ENCODE measurements at regions of chr19 and their contacts with region 1.

Region 1: DNA sequence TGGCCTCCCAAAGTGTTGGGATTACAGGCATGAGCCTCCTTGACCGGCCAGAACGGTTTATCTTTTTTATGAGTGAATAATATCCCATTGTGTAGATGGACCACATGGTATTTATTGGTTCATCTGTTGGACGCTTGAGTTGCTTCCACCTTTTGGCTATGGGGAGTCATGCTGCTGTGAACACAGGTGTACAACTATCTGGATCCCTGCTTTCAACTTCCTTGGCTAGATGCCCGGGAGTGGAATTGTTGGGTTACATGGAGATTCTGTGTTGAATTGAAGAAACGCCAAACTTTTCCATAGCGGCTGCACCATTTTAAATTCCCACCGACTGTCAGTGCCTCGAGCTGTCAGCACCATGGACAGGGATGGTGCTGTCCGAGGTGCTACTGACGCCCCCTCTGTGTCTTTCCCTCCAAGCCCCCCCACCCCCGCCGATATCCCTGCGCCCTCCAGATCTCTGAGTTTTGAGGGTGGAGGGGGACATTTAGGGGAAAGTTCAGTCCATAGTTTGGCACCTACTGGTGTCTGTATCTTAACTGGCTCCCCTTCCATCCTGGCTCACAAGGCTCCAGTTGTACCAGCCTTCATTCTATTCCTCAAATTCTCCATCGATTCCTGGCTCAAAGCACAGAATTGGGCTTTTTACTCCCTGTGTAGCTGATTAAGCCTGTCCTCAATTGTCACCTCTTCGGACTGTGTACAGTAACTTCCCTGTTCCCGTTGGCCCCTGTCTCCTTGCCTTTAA is 27.3 kb downstream of the PNPLA6 start:
- DNase-seq: peak; percentile 47
- ATAC-seq: no peak
- H3K4me3 Mint-ChIP-seq: no peak overlapping the region
- H3K27ac Mint-ChIP-seq: no peak overlapping the region
- H3K4me1 Mint-ChIP-seq: no peaks in the 10 kb centered on the region
- H3K27me3 Mint-ChIP-seq: no peaks in the 10 kb centered on the region; the same call in 1 of the 2 replicates
- CTCF ChIP-seq: no peak

Region 2: GRCh38 chr19:7408251-7408650 is 154.6 kb before region 1 on chr19:
- CTCF ChIA-PET with region 1: interaction called, 10 read pairs
- POLR2A ChIA-PET with region 1: no interaction called
- DNase-seq: no peak
- ATAC-seq: no peak
- H3K4me3 Mint-ChIP-seq: no peak overlapping the region
- H3K27ac Mint-ChIP-seq: peak overlapping the region; percentile 30; the same call in 1 of the 2 replicates
- H3K4me1 Mint-ChIP-seq: peaks cover 21% of the 10 kb centered on the region
- H3K27me3 Mint-ChIP-seq: no peaks in the 10 kb centered on the region; the same call in 1 of the 2 replicates
- CTCF ChIP-seq: no peak

Region 3: GRCh38 chr19:7540761-7541491 is 21.9 kb before region 1 on chr19:
- CTCF ChIA-PET with region 1: interaction called, 12 read pairs
- POLR2A ChIA-PET with region 1: no interaction called
- DNase-seq: peak; percentile 89
- ATAC-seq: peak; percentile 99
- H3K4me3 Mint-ChIP-seq: no peak overlapping the region
- H3K27ac Mint-ChIP-seq: no peak overlapping the region
- H3K4me1 Mint-ChIP-seq: peaks cover 4% of the 10 kb centered on the region; the same call in 1 of the 2 replicates
- H3K27me3 Mint-ChIP-seq: no peaks in the 10 kb centered on the region
- CTCF ChIP-seq: no peak

Region 4: GRCh38 chr19:7595466-7596133 is 32.8 kb after region 1 on chr19 and contains the start of gene CAMSAP3:
- CTCF ChIA-PET with region 1: interaction called, 85 read pairs
- POLR2A ChIA-PET with region 1: no interaction called
- DNase-seq: peak; percentile 90
- ATAC-seq: peak; percentile 96
- H3K4me3 Mint-ChIP-seq: peak within 1 kb of the TSS; percentile 79
- H3K27ac Mint-ChIP-seq: no peak within 1 kb of the TSS
- H3K4me1 Mint-ChIP-seq: peaks cover 17% of the 10 kb centered on the region
- H3K27me3 Mint-ChIP-seq: peaks cover 17% of the 10 kb centered on the region
- CTCF ChIP-seq: no peak
- total RNA-seq, gene CAMSAP3: 27.8 to 34.6 TPM (median 32.1 TPM) in 3 replicates

Region 5: DNA sequence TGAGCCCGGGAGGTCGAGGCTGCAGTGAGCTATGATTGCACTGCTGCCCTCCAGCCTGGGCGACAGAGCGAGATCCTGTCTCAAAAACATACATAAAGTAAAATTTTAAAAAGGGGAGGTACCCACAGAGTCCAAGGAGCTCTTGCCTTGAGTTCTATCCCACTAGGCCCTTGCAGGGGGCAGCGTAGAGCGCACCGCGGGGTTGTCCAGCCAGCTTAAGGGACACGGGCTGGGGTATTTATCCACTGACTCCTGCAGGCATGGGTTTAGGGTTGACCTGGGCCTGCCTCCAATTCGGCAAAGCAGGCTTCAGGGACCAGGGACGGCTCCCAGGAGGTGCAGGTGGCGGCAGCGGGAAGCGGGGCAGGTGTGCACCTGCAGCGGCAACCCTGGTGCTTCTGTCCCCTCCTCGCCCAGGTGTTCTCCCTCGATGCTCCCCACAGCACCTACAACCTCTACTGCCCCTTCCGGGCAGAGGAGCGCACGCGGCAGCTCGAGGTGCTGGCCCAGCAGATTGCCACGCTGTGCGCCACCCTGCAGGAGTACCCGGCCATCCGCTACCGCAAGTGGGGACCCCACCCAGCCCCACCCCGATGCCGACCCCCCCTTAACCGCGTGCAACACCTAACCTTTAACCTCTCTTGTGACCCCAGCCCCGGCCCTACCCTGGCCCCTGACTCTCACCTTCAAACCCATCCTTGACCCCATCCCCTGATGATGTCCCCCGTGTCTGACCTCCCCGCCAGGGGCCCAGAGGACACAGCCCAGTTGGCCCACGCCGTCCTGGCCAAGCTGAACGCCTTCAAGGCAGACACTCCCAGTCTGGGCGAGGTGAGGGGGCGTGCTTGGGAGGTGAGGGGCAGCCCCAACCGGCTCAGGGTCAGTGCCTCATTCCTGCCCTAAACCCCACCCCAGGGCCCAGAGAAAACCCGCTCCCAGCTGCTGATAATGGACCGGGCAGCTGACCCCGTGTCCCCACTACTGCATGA is 78.8 kb after region 1 on chr19:
- CTCF ChIA-PET with region 1: interaction called, 24 read pairs
- POLR2A ChIA-PET with region 1: no interaction called
- DNase-seq: peak; percentile 66
- ATAC-seq: peak; percentile 57
- H3K4me3 Mint-ChIP-seq: no peak overlapping the region
- H3K27ac Mint-ChIP-seq: no peak overlapping the region
- H3K4me1 Mint-ChIP-seq: no peaks in the 10 kb centered on the region
- H3K27me3 Mint-ChIP-seq: peaks cover 3% of the 10 kb centered on the region
- CTCF ChIP-seq: 0 out of 2 replicates have a peak, but pooled peaks have one; percentile 31

Region 6: DNA sequence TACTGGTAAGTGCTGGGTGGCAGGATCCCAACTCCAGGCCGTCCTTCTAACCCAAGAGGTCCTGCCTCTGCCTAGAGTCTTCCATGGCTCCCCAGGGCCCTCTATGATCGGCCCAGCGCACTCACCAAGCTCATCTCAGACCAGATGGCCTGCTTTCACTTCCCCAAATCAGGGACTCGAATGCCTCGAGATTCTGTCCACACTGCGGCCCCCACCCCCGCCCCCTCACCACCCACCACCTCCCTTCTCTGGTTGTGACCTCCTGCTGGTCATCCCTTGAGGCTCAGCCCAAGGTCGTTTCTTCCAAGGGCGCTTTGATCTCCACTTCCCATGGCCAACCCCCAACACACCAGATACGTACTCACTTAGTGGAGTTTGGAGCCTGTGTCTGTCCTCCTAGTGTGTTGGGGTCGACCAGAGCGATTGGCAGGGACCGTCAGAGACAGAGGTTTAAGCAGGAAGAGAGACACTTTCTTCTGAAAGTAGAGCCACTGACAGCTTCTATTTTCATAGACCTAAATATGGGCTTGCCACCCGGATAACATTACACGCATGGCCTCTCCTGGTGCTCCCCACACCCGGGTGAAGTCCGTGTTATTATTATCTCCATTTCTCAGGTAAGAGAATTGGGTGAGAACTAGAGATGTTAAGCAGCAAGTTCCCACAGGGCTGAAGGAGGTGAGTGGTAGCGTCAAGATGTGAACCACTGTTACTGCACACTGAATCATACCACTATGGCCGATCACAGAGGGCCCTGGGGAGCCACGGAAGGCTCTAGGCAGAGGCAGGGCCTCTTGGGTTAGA is 139.0 kb after region 1 on chr19 and contains the start of gene FCER2:
- CTCF ChIA-PET with region 1: interaction called, 15 read pairs
- POLR2A ChIA-PET with region 1: no interaction called
- DNase-seq: no peak
- ATAC-seq: no peak
- H3K4me3 Mint-ChIP-seq: no peak within 1 kb of the TSS
- H3K27ac Mint-ChIP-seq: no peak within 1 kb of the TSS
- H3K4me1 Mint-ChIP-seq: peaks cover 23% of the 10 kb centered on the region
- H3K27me3 Mint-ChIP-seq: peaks cover 18% of the 10 kb centered on the region
- CTCF ChIP-seq: no peak
- total RNA-seq, gene FCER2: 0.37 to 0.48 TPM (median 0.46 TPM) in 3 replicates

Region 7: GRCh38 chr19:7868676-7869452 is 306.0 kb after region 1 on chr19:
- CTCF ChIA-PET with region 1: interaction called, 16 read pairs
- POLR2A ChIA-PET with region 1: no interaction called
- DNase-seq: peak; percentile 95
- ATAC-seq: peak; percentile 41
- H3K4me3 Mint-ChIP-seq: peak overlapping the region; percentile 63
- H3K27ac Mint-ChIP-seq: peak overlapping the region; percentile 78; the same call in 1 of the 2 replicates
- H3K4me1 Mint-ChIP-seq: peaks cover 28% of the 10 kb centered on the region
- H3K27me3 Mint-ChIP-seq: peaks cover 62% of the 10 kb centered on the region
- CTCF ChIP-seq: peak; percentile 77